ENCODE measurements at regions of chr5 and their contacts with region 1.

Region 1: DNA sequence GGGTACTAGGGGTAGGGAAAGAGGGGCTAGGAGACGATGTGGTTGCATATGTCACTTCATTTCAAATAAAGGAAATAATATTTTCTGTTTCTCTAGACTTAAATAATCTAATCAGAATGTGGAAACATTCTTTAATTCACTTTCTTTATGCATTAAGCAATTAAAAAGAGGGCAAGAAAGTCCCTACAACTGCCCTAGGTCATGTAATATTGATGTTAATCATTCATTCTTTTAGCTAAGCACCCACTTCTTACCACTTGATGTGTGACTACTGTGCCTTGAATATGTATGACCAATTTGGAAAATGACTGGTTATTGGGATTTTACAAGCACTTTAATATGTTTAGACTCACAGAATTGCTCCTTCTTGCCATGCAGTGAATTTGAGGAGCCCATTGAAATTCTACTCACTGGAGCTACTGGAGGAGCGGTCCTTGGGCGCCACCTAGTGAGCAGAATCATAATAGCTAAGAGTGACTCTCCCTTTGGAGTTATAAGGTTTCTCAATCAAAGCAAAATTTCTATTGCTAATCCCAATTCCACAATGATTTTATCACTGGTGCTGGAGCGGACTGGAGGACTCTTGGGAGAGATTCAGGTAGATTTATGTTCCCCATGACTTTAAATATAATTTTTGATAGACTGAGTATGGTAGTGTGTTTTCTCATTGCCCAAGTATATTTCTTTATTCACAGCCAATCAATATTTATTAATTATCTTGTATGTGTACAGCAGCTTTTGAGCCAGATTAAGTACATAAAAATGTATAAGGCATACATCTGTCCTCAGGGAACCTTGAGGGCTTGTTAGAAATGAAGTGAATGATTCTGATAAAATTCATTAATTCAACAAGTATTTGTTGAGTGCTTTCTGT is 225.1 kb downstream of the ADGRV1 start:
- DNase-seq: peak; percentile 78
- H3K4me3 Mint-ChIP-seq: no peak overlapping the region
- H3K27ac Mint-ChIP-seq: no peak overlapping the region
- H3K4me1 Mint-ChIP-seq: no peaks in the 10 kb centered on the region
- H3K27me3 Mint-ChIP-seq: peaks cover 88% of the 10 kb centered on the region
- CTCF ChIP-seq: peak; percentile 85

Region 2: GRCh38 chr5:90529194-90529938 is 254.3 kb before region 1 on chr5 and contains the start of gene LYSMD3:
- CTCF ChIA-PET with region 1: interaction called, 3 read pairs
- POLR2A ChIA-PET with region 1: no interaction called
- intact Hi-C with region 1: loop called (anchors 5 kb)
- DNase-seq: peak; percentile 96
- H3K4me3 Mint-ChIP-seq: peak within 1 kb of the TSS; percentile 95
- H3K27ac Mint-ChIP-seq: peak within 1 kb of the TSS; percentile 77
- H3K4me1 Mint-ChIP-seq: peaks cover 21% of the 10 kb centered on the region
- H3K27me3 Mint-ChIP-seq: peaks cover 33% of the 10 kb centered on the region
- CTCF ChIP-seq: no peak
- total RNA-seq, gene LYSMD3: 25.6 and 27.4 TPM in 2 replicates

Region 3: GRCh38 chr5:90709323-90710155 is 74.2 kb before region 1 on chr5:
- CTCF ChIA-PET with region 1: interaction called, 40 read pairs
- POLR2A ChIA-PET with region 1: no interaction called
- intact Hi-C with region 1: loop called (anchors 1 kb)
- DNase-seq: peak; percentile 57
- H3K4me3 Mint-ChIP-seq: no peak overlapping the region
- H3K27ac Mint-ChIP-seq: no peak overlapping the region
- H3K4me1 Mint-ChIP-seq: no peaks in the 10 kb centered on the region
- H3K27me3 Mint-ChIP-seq: peaks cover 81% of the 10 kb centered on the region
- CTCF ChIP-seq: peak; percentile 54

Region 4: DNA sequence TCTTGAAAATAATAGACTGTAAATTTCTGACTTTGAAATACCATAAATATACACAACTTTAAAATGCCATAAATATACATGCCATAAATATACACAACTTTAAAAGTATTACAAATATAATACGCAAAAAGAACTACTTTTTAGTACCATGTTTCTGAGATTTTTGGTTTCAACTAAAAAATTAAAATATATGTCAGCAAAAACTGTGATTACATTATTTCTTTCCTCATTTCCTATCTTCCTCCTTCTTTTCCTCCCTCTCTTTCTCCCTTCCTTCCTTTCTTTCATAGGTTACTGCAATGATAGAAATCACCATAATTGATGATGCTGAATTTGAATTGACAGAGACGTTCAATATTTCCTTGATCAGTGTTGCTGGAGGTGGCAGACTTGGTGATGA is 24.6 kb before region 1 on chr5:
- CTCF ChIA-PET with region 1: interaction called, 15 read pairs
- POLR2A ChIA-PET with region 1: no interaction called
- intact Hi-C with region 1: no loop called
- DNase-seq: no peak
- H3K4me3 Mint-ChIP-seq: no peak overlapping the region
- H3K27ac Mint-ChIP-seq: no peak overlapping the region
- H3K4me1 Mint-ChIP-seq: no peaks in the 10 kb centered on the region
- H3K27me3 Mint-ChIP-seq: peaks cover 93% of the 10 kb centered on the region
- CTCF ChIP-seq: no peak

Measured in MCF 10A (cell line).